ENCODE measurements at regions of chr11 and their contacts with region 1.

Region 1: GRCh38 chr11:108121274-108122155 is at the start of gene ACAT1:
- DNase-seq: peak; percentile 96
- H3K4me3 Mint-ChIP-seq: peak within 1 kb of the TSS; percentile 85
- H3K27ac Mint-ChIP-seq: peak within 1 kb of the TSS; percentile 16
- H3K4me1 Mint-ChIP-seq: peaks cover 40% of the 10 kb centered on the region
- H3K27me3 Mint-ChIP-seq: no peaks in the 10 kb centered on the region
- total RNA-seq, gene ACAT1: 54.9 to 55.0 TPM

Region 2: GRCh38 chr11:108008656-108009496 is 112.6 kb before region 1 on chr11 and contains the start of gene CUL5:
- CTCF ChIA-PET with region 1: interaction called, 4 read pairs
- intact Hi-C with region 1: loop called (anchors 1 kb)
- DNase-seq: peak; percentile 92
- H3K4me3 Mint-ChIP-seq: peak within 1 kb of the TSS; percentile 93
- H3K27ac Mint-ChIP-seq: peak within 1 kb of the TSS; percentile 76
- H3K4me1 Mint-ChIP-seq: peaks cover 15% of the 10 kb centered on the region
- H3K27me3 Mint-ChIP-seq: no peaks in the 10 kb centered on the region
- total RNA-seq, gene CUL5: 25.9 to 26.2 TPM

Region 3: DNA sequence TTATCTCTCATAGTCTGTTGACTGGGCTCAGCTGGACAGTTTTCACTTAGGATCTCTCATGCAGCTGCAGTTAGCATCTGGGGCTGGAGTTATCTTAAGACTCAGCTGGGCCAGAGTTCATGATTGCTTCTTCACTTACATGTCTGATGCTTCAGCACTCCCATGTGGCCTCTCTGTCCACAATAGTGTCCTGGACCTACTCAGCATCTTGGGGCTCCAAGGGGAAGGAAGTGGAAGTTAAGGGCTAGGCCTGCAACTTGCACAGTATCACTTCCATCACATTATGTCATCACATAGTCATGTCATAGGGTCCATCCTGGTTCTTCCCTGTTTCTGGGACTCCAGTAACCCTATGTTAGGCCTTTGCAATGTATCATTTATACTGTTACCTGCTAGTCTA is 229.9 kb after region 1 on chr11:
- CTCF ChIA-PET with region 1: no interaction called
- intact Hi-C with region 1: loop called (anchors 5 kb)
- DNase-seq: peak; percentile 30
- H3K4me3 Mint-ChIP-seq: no peak overlapping the region
- H3K27ac Mint-ChIP-seq: no peak overlapping the region
- H3K4me1 Mint-ChIP-seq: peaks cover under 1% of the 10 kb centered on the region
- H3K27me3 Mint-ChIP-seq: no peaks in the 10 kb centered on the region

Region 4: DNA sequence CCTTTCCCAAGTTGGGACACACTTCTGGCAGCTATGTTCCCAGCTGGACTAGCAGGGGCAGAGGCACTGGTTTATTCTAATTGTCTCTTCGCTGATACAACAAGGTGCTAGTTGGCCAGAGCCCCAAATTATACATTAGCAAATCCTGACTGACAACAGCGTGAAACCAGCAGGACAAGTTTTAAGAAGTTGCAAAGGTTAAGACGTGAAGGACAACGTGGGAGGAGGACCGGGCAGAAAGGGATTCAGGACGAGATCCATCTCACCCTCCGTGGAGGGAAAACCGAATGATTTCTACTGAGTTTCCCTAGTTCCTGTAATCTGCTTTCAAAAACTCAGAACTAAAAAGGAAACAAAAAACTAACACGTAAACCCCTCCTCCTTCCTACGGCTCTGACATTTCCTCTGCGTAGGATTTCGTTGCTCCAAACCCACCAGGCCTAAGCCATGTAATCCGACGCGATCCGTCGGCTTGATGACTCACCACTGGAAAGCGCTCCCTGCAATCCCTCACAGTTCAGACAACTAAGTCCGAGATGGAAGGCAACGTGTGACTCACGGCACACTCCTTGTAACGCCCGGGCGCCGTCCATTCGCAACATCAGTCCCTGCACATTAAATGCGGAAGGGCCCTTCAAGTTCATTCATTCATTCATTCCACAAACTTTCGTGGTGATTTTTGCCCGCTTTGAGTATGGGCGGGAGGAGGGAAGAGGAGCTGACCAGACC is 376.0 kb after region 1 on chr11:
- CTCF ChIA-PET with region 1: no interaction called
- intact Hi-C with region 1: loop called (anchors 2 kb)
- DNase-seq: peak; percentile 84
- H3K4me3 Mint-ChIP-seq: peak overlapping the region; percentile 85
- H3K27ac Mint-ChIP-seq: peak overlapping the region; percentile 92
- H3K4me1 Mint-ChIP-seq: peaks cover 16% of the 10 kb centered on the region
- H3K27me3 Mint-ChIP-seq: no peaks in the 10 kb centered on the region

Region 5: GRCh38 chr11:108647701-108648527 is 526.4 kb after region 1 on chr11:
- CTCF ChIA-PET with region 1: interaction called, 38 read pairs
- intact Hi-C with region 1: loop called (anchors 1 kb)
- DNase-seq: peak; percentile 86
- H3K4me3 Mint-ChIP-seq: no peak overlapping the region
- H3K27ac Mint-ChIP-seq: no peak overlapping the region
- H3K4me1 Mint-ChIP-seq: no peaks in the 10 kb centered on the region
- H3K27me3 Mint-ChIP-seq: no peaks in the 10 kb centered on the region

Region 6: DNA sequence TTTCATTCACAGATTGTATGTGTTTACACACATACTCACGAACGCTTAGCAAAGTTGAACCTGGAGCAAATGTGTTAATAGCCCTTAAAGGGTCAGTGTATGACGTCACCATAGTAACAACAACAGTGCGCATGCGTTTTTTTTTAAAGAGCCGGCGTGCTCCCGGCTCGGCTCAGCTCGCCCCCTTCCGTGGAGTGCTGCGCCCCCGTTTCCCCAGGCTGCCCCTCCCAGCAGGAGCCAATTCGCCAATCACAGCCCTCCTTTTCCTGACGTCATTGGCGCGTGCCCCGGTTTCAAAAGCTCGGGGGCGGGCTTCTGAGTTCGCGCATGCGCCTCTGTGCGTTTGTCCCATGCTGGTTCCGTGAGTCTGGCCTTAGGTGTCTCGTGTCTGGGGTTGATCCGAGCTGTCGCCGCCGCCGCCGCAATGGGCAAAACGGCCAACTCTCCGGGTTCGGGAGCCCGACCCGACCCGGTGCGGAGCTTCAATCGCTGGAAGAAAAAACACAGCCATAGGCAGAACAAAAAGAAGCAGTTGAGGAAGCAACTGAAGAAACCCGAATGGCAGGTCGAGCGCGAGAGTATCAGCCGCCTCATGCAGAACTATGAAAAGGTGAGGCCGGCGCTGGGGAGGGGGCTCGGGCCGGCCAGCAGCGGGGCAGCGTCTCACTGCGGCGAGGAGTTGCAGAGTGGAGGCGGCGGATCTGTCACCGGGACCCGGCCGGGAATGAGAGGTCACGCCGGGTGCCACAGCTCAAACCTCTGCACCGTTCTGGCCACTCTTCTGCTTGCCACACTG is 543.4 kb after region 1 on chr11 and contains the start of gene DDX10:
- CTCF ChIA-PET with region 1: interaction called, 6 read pairs
- intact Hi-C with region 1: loop called (anchors 1 kb)
- DNase-seq: peak; percentile 99
- H3K4me3 Mint-ChIP-seq: peak within 1 kb of the TSS; percentile 99
- H3K27ac Mint-ChIP-seq: peak within 1 kb of the TSS; percentile 86
- H3K4me1 Mint-ChIP-seq: peaks cover 38% of the 10 kb centered on the region
- H3K27me3 Mint-ChIP-seq: no peaks in the 10 kb centered on the region
- total RNA-seq, gene DDX10: 36.6 to 43.0 TPM

Measured in activated naive CD4-positive, alpha-beta T cell treated with anti-CD3 and anti-CD28 coated beads for 36 hours (primary cell).